ENCODE measurements at regions of chr11 and their contacts with region 1.

Region 1: GRCh38 chr11:65700391-65700790 is 11.7 kb upstream of the KAT5 start:
- DNase-seq: no peak
- ATAC-seq: no peak
- H3K4me3 ChIP-seq: no peak overlapping the region
- H3K4me3 Mint-ChIP-seq: no peak overlapping the region
- H3K27ac ChIP-seq: no peak overlapping the region
- H3K27ac Mint-ChIP-seq: no peak overlapping the region
- H3K4me1 ChIP-seq: no peaks in the 10 kb centered on the region
- H3K4me1 Mint-ChIP-seq: no peaks in the 10 kb centered on the region
- H3K27me3 ChIP-seq: no peaks in the 10 kb centered on the region
- H3K27me3 Mint-ChIP-seq: peaks cover 2% of the 10 kb centered on the region
- CTCF ChIP-seq: no peak

Region 2: DNA sequence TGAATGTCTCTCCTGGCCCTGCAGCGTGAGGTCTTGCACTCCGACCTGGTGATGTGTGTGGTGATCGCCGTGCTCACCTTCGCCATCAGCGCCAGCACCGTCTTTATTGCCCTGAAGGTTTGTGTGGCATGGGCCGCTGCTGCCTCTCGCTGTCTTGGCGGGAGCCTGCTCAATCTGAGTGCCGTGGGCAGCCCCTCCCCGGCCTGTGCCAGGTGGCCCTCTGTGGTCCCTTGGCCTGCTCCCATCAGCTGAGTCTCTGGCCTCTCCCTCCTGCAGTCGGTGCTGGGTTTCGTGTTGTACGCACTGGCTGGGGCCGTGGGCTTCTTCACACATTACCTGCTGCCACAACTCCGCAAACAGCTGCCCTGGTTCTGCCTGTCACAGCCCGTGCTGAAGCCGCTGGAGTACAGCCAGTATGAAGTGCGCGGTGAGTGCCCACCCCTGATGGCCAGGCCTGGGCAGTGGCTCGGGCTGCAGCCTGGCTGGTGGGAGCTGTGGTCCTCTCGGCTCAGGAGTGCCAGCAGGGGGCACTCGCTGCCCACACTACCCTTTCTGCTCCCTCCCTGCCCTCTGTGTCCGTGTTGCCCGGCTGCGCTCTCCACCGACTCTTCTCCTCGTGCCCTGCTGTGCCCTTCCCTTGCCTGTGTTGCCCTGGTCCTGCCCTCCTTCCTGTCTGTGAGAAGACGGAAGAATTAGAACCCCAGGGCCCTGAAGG is 74.6 kb before region 1 on chr11:
- CTCF ChIA-PET with region 1: interaction called, 22 read pairs
- POLR2A ChIA-PET with region 1: interaction called, 3 read pairs
- intact Hi-C with region 1: no loop called
- DNase-seq: peak in 8 of 9 experiments; percentile 24 to 83 (median 63)
- ATAC-seq: peak; percentile 88
- H3K4me3 ChIP-seq: no peak overlapping the region
- H3K4me3 Mint-ChIP-seq: no peak overlapping the region
- H3K27ac ChIP-seq: no peak overlapping the region
- H3K27ac Mint-ChIP-seq: peak overlapping the region; percentile 55
- H3K4me1 ChIP-seq: peaks cover 5% of the 10 kb centered on the region
- H3K4me1 Mint-ChIP-seq: peaks cover 9% of the 10 kb centered on the region
- H3K27me3 ChIP-seq: no peaks in the 10 kb centered on the region
- H3K27me3 Mint-ChIP-seq: no peaks in the 10 kb centered on the region
- CTCF ChIP-seq: peak; percentile 66

Region 3: DNA sequence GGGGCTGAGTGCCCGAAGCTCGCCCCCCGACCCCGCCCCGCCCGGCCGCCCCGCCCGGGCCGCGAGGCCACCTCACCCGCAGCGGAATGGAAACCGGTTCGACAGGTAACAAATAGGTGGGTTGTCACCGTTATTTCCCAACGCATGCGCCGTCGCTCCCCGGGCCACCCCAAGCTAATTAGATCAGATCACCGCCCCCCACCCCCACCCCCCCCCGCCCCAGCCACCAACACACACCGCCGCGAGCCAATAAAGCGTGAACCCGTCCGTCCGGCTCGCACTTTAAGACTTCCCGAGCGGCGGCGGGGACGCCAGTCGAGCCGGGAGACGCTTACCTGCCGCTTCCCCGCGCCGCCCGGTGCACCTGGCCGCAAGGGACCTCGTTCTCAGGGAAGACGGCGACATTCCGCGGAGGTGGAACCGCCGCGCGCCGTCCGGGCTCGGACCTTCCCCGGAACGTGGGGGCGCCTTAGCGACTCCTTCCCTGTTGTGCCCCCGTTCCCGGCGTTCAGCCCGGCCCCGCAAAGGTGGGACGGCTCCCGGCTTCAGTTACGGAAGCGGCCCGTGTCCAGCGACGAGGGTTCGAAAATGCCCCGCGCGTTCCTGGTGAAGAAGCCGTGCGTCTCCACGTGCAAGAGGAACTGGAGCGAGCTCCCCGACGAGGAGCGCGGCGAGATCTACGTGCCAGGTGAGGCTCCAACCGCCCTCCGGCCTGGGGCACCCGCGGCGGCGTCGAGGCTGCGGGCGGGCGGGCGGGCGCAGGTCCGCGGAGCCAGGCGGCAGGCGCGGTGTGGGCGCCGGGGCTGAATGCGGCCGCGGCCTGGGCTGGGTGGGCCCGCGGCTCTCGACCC is 86.6 kb after region 1 on chr11 and contains the start of gene OVOL1:
- CTCF ChIA-PET with region 1: no interaction called
- POLR2A ChIA-PET with region 1: no interaction called
- intact Hi-C with region 1: no loop called
- DNase-seq: peak in 5 of 9 experiments; percentile 16 to 52 (median 46)
- ATAC-seq: peak; percentile 21
- H3K4me3 ChIP-seq: peak within 1 kb of the TSS; percentile 24 to 39
- H3K4me3 Mint-ChIP-seq: peak within 1 kb of the TSS; percentile 81
- H3K27ac ChIP-seq: no peak within 1 kb of the TSS
- H3K27ac Mint-ChIP-seq: no peak within 1 kb of the TSS
- H3K4me1 ChIP-seq: peaks cover 38% of the 10 kb centered on the region
- H3K4me1 Mint-ChIP-seq: peaks cover 18% of the 10 kb centered on the region
- H3K27me3 ChIP-seq: peaks cover 29% of the 10 kb centered on the region in 2 experiments
- H3K27me3 Mint-ChIP-seq: peaks cover 35% of the 10 kb centered on the region
- CTCF ChIP-seq: no peak
- total RNA-seq, gene OVOL1: 0.31 to 0.33 TPM

Measured in CD8-positive, alpha-beta T cell (primary cell).